ENCODE measurements at regions of chr2 and their contacts with region 1.

Region 1: GRCh38 chr2:168494190-168494711 is 38.2 kb downstream of the CERS6 start:
- DNase-seq: peak; percentile 46

Region 2: GRCh38 chr2:168480825-168481585 is 13.2 kb before region 1 on chr2:
- CTCF ChIA-PET with region 1: interaction called, 21 read pairs
- POLR2A ChIA-PET with region 1: no interaction called
- DNase-seq: no peak